ENCODE measurements at regions of chr2 and their contacts with region 1.

Region 1: GRCh38 chr2:73071360-73072133 is at the start of gene SFXN5:
- DNase-seq: peak; percentile 97
- ATAC-seq: peak; percentile 96
- H3K4me3 Mint-ChIP-seq: peak within 1 kb of the TSS; percentile 82
- H3K27ac Mint-ChIP-seq: peak within 1 kb of the TSS; percentile 90
- H3K4me1 Mint-ChIP-seq: peaks cover 17% of the 10 kb centered on the region
- H3K27me3 Mint-ChIP-seq: no peaks in the 10 kb centered on the region
- total RNA-seq, gene SFXN5: 4.5 to 6.2 TPM

Region 2: GRCh38 chr2:71331581-71332434 is 1739.7 kb before region 1 on chr2 and contains the start of gene ZNF638:
- CTCF ChIA-PET with region 1: no interaction called
- POLR2A ChIA-PET with region 1: no interaction called
- intact Hi-C with region 1: loop called in 1 of 2 experiments (anchors 1 kb)
- DNase-seq: peak; percentile 96
- ATAC-seq: peak; percentile 99
- H3K4me3 Mint-ChIP-seq: peak within 1 kb of the TSS; percentile 98
- H3K27ac Mint-ChIP-seq: peak within 1 kb of the TSS; percentile 100
- H3K4me1 Mint-ChIP-seq: peaks cover 31% of the 10 kb centered on the region
- H3K27me3 Mint-ChIP-seq: peaks cover 5% of the 10 kb centered on the region
- total RNA-seq, gene ZNF638: 79.8 to 97.5 TPM

Region 3: GRCh38 chr2:72605836-72606442 is 465.6 kb before region 1 on chr2:
- CTCF ChIA-PET with region 1: no interaction called
- POLR2A ChIA-PET with region 1: no interaction called
- intact Hi-C with region 1: no loop called
- DNase-seq: no peak
- ATAC-seq: no peak
- H3K4me3 Mint-ChIP-seq: no peak overlapping the region
- H3K27ac Mint-ChIP-seq: no peak overlapping the region
- H3K4me1 Mint-ChIP-seq: peaks cover 17% of the 10 kb centered on the region
- H3K27me3 Mint-ChIP-seq: no peaks in the 10 kb centered on the region

Region 4: DNA sequence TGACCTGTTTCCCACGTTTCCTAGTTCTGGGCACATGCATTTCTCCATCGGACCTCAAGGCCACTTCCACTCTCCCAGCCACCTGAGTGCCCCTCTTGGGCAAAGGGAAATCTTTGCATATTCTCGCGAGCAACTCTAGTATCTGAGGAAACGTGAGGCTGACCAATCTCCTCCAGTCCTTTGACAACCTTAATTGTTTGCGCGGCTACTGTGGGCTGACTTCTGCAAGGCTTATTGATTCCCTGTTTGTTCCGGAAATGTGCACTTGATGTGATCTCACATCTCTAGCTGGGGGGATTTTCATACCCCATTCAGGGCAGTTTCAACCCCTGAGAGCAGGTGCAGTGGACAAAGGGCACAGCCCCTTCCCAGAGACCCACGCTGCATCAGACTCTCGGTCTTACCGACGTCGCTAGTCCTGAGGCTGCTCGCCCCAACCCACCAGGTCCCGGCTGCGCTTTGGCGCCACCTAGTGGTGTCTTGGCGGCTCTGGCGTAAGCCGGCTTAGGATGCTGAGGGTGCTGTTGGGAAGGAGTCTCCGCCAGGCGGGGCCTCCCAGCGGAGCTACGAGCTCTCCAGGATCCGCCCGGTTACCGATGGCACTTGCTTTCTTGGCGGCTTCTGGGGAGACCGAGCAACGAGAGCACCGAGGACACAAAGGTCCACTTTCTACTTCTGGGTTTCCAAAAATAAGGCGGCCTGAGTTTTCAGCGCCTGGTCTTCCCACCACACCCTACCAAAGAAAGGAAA is 209.1 kb before region 1 on chr2:
- CTCF ChIA-PET with region 1: interaction called, 3 read pairs
- POLR2A ChIA-PET with region 1: no interaction called
- intact Hi-C with region 1: loop called in 1 of 2 experiments (anchors 1 kb)
- DNase-seq: peak; percentile 93
- ATAC-seq: peak; percentile 92
- H3K4me3 Mint-ChIP-seq: peak overlapping the region; percentile 36
- H3K27ac Mint-ChIP-seq: peak overlapping the region; percentile 2
- H3K4me1 Mint-ChIP-seq: peaks cover 10% of the 10 kb centered on the region
- H3K27me3 Mint-ChIP-seq: peaks cover 50% of the 10 kb centered on the region

Region 5: GRCh38 chr2:72953976-72954375 is 117.6 kb before region 1 on chr2:
- CTCF ChIA-PET with region 1: no interaction called
- POLR2A ChIA-PET with region 1: no interaction called
- intact Hi-C with region 1: no loop called
- DNase-seq: peak; percentile 25
- ATAC-seq: peak; percentile 87
- H3K4me3 Mint-ChIP-seq: peak overlapping the region; percentile 43
- H3K27ac Mint-ChIP-seq: peak overlapping the region; percentile 55
- H3K4me1 Mint-ChIP-seq: peaks cover 13% of the 10 kb centered on the region
- H3K27me3 Mint-ChIP-seq: no peaks in the 10 kb centered on the region

Region 6: GRCh38 chr2:72993147-72993932 is 78.2 kb before region 1 on chr2:
- CTCF ChIA-PET with region 1: no interaction called
- POLR2A ChIA-PET with region 1: no interaction called
- intact Hi-C with region 1: loop called in 1 of 2 experiments (anchors 5 kb)
- DNase-seq: peak; percentile 50
- ATAC-seq: peak; percentile 42
- H3K4me3 Mint-ChIP-seq: no peak overlapping the region
- H3K27ac Mint-ChIP-seq: no peak overlapping the region
- H3K4me1 Mint-ChIP-seq: no peaks in the 10 kb centered on the region
- H3K27me3 Mint-ChIP-seq: no peaks in the 10 kb centered on the region

Region 7: DNA sequence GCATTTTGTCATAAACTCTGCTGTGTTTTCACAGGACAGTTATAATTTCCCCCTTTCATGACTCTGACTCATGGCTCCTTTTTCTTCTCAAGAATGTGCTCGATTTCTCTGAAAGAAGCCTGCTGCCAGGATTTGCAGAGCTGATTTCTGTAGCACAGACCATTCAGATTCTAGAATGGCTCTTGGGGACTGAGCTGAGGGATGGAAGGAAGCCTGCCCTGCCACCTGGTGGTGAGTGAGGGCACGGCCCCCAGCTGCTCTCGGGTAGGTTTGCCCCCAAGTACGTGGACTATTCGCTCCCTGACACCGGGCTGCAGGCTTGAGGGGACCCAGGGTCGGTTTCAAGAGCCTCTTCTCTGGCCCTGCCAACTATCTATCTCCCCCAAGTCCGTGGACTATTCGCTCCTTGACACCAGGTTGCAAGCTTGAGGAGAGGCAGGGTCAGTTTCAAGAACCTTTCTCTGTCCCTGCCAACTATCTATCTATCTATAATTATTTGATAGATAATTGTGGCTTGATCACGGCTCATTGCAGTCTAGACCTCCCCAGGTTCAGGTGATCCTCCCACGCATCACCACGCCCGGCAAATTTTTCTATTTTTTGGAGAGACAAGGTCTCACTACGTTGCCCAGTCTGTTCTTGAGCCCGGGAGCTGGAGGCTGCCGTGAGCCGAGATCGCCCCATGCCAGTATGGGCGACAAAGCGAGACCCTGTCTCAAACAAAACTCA is 141.1 kb after region 1 on chr2:
- CTCF ChIA-PET with region 1: interaction called, 3 read pairs
- POLR2A ChIA-PET with region 1: no interaction called
- intact Hi-C with region 1: loop called in 1 of 2 experiments (anchors 1 kb)
- DNase-seq: peak; percentile 89
- ATAC-seq: peak; percentile 79
- H3K4me3 Mint-ChIP-seq: no peak overlapping the region
- H3K27ac Mint-ChIP-seq: no peak overlapping the region
- H3K4me1 Mint-ChIP-seq: peaks cover 32% of the 10 kb centered on the region
- H3K27me3 Mint-ChIP-seq: peaks cover 7% of the 10 kb centered on the region

Region 8: GRCh38 chr2:73385595-73386341 is 314.2 kb after region 1 on chr2 and contains the start of gene ALMS1:
- CTCF ChIA-PET with region 1: no interaction called
- POLR2A ChIA-PET with region 1: no interaction called
- intact Hi-C with region 1: loop called in 1 of 2 experiments (anchors 5 kb)
- DNase-seq: peak; percentile 94
- ATAC-seq: peak; percentile 89
- H3K4me3 Mint-ChIP-seq: peak within 1 kb of the TSS; percentile 91
- H3K27ac Mint-ChIP-seq: peak within 1 kb of the TSS; percentile 91
- H3K4me1 Mint-ChIP-seq: peaks cover 27% of the 10 kb centered on the region
- H3K27me3 Mint-ChIP-seq: no peaks in the 10 kb centered on the region
- total RNA-seq, gene ALMS1: 19.2 to 24.0 TPM

Measured in activated CD4-positive, alpha-beta T cell treated with anti-CD3 and anti-CD28 coated beads for 36 hours (primary cell).